B cell (primary cell): ENCODE measurements at regions of chr14 and their contacts with region 1.

Region 1: GRCh38 chr14:66359500-66359899 is 126.7 kb upstream of the CCDC196 start:
- DNase-seq: peak; percentile 68
- ATAC-seq: peak; percentile 36
- H3K4me3 ChIP-seq: no peak overlapping the region
- H3K4me3 Mint-ChIP-seq: no peak overlapping the region
- H3K27ac ChIP-seq: no peak overlapping the region
- H3K27ac Mint-ChIP-seq: no peak overlapping the region
- H3K4me1 ChIP-seq: no peaks in the 10 kb centered on the region
- H3K4me1 Mint-ChIP-seq: no peaks in the 10 kb centered on the region
- H3K27me3 ChIP-seq: peaks cover 0 to 5% (median 3%) of the 10 kb centered on the region in 4 experiments
- H3K27me3 Mint-ChIP-seq: peaks cover 11% of the 10 kb centered on the region
- CTCF ChIP-seq: peak; percentile 79

Region 2: DNA sequence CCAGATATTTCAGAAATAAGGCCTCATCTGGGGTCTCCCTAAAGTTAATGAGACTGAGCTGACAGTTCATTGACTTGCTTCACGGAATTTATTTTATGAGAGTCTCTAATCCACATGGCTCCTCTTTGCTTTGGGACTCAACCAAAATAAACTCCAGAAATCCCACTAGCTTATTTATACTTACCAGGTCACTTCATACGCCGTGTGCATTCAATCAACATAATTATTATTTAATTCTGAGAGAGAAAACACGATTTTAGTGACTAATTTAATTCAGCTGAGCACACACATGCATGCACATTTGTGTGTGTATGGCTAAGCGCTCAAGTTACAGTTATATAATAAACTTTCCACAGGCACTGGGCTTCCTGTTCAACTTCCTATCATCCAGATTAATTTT is 206.8 kb before region 1 on chr14:
- CTCF ChIA-PET with region 1: no interaction called
- POLR2A ChIA-PET with region 1: no interaction called
- intact Hi-C with region 1: no loop called
- DNase-seq: no peak
- ATAC-seq: no peak
- H3K4me3 ChIP-seq: no peak overlapping the region
- H3K4me3 Mint-ChIP-seq: no peak overlapping the region
- H3K27ac ChIP-seq: no peak overlapping the region
- H3K27ac Mint-ChIP-seq: no peak overlapping the region
- H3K4me1 ChIP-seq: no peaks in the 10 kb centered on the region
- H3K4me1 Mint-ChIP-seq: no peaks in the 10 kb centered on the region
- H3K27me3 ChIP-seq: no peaks in the 10 kb centered on the region
- H3K27me3 Mint-ChIP-seq: no peaks in the 10 kb centered on the region
- CTCF ChIP-seq: no peak

Region 3: DNA sequence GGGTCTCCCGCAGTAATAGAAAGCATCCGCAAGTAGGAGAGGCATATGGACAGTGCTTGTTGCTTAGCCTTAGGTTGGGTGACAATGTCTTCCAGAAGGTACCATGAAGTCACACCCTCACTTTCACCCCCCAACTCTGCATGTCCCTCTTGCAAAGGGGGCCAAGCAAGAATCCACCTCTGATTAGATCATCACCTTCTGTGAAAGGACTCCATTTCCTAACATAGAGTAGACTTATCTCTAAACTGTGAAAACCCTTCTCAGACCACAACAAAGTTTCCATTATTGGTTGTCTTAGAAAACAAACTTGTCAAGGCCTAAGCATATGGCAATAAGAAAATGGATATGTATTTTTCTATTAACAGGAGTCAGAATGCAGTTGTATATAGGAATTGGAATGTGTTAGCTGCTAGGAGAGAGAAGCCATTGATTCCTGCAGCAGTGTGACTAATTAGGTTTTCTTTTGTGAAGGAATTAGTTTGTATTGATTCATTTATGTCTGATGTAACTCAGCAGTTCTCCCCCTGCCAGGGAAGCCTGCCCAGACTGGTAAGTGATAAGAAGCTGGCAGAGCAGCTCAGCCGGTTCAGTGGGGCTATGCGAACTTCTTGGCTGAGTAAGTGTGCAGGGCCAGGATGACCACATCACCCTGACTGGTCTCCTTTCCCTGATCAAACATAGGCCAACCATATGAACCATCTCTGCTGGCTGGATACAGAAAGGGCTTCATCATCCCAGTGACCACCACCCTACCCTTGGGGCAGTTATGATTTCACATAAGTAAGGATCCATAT is 19.4 kb after region 1 on chr14:
- CTCF ChIA-PET with region 1: interaction called, 13 read pairs
- POLR2A ChIA-PET with region 1: no interaction called
- intact Hi-C with region 1: no loop called
- DNase-seq: no peak
- ATAC-seq: no peak
- H3K4me3 ChIP-seq: no peak overlapping the region
- H3K4me3 Mint-ChIP-seq: no peak overlapping the region
- H3K27ac ChIP-seq: no peak overlapping the region
- H3K27ac Mint-ChIP-seq: no peak overlapping the region
- H3K4me1 ChIP-seq: no peaks in the 10 kb centered on the region
- H3K4me1 Mint-ChIP-seq: no peaks in the 10 kb centered on the region
- H3K27me3 ChIP-seq: no peaks in the 10 kb centered on the region
- H3K27me3 Mint-ChIP-seq: no peaks in the 10 kb centered on the region
- CTCF ChIP-seq: no peak

Region 4: DNA sequence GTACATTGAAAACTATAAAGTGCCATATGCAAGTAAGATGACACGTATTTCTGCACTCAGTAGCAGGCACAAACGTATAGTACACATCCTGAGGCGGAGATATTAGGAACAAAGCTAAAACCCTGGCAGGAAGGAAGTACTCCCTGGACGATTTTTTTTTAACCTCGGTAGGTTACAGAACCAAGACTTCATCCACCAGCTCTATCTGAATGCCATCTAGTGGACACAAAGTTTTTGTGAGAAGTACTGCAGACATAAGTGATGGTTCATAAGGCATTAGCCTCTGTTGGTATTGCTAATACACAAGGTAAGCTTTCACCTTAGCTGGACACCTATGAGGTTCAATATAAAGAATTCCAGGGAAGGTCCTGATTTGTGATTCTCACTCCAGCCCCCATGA is 43.7 kb after region 1 on chr14:
- CTCF ChIA-PET with region 1: interaction called, 11 read pairs
- POLR2A ChIA-PET with region 1: no interaction called
- intact Hi-C with region 1: no loop called
- DNase-seq: peak; percentile 8
- ATAC-seq: no peak
- H3K4me3 ChIP-seq: no peak overlapping the region
- H3K4me3 Mint-ChIP-seq: no peak overlapping the region
- H3K27ac ChIP-seq: no peak overlapping the region
- H3K27ac Mint-ChIP-seq: no peak overlapping the region
- H3K4me1 ChIP-seq: no peaks in the 10 kb centered on the region
- H3K4me1 Mint-ChIP-seq: peaks cover 4% of the 10 kb centered on the region
- H3K27me3 ChIP-seq: no peaks in the 10 kb centered on the region
- H3K27me3 Mint-ChIP-seq: no peaks in the 10 kb centered on the region
- CTCF ChIP-seq: no peak

Region 5: GRCh38 chr14:67111022-67111421 is 751.5 kb after region 1 on chr14:
- CTCF ChIA-PET with region 1: interaction called, 22 read pairs
- POLR2A ChIA-PET with region 1: no interaction called
- intact Hi-C with region 1: no loop called
- DNase-seq: no peak
- ATAC-seq: no peak
- H3K4me3 ChIP-seq: no peak overlapping the region
- H3K4me3 Mint-ChIP-seq: no peak overlapping the region
- H3K27ac ChIP-seq: no peak overlapping the region
- H3K27ac Mint-ChIP-seq: no peak overlapping the region
- H3K4me1 ChIP-seq: no peaks in the 10 kb centered on the region
- H3K4me1 Mint-ChIP-seq: no peaks in the 10 kb centered on the region
- H3K27me3 ChIP-seq: no peaks in the 10 kb centered on the region
- H3K27me3 Mint-ChIP-seq: no peaks in the 10 kb centered on the region
- CTCF ChIP-seq: no peak

Region 6: DNA sequence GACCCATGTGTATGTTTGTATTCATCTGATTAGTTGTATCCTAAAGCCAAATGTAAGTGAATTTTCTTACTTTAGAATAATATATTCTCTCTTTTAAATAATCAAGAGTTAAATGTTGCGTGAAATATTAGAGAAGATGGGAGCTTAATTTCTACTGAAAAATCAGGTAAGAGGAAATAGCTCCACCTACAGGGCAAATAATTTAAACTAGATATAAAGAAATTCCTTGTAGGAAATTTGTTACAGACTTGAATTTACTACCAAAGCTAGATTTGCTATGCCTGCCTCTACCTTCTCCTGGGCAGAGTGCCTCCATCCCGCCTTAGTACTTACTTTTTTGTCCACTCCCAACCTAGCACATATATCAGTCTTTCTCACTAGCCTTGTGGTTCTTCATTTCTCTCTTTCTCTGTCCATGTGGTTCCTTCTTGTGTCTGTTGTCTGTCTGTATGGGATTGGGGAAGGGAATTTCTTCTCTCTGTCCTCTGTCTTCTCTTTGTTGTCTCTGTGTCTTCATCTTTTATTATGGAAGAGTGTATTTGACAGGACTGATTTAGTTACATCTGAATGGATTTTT is 926.5 kb after region 1 on chr14:
- CTCF ChIA-PET with region 1: interaction called, 31 read pairs
- POLR2A ChIA-PET with region 1: no interaction called
- intact Hi-C with region 1: no loop called
- DNase-seq: peak; percentile 56
- ATAC-seq: no peak
- H3K4me3 ChIP-seq: no peak overlapping the region
- H3K4me3 Mint-ChIP-seq: no peak overlapping the region
- H3K27ac ChIP-seq: no peak overlapping the region
- H3K27ac Mint-ChIP-seq: no peak overlapping the region
- H3K4me1 ChIP-seq: no peaks in the 10 kb centered on the region
- H3K4me1 Mint-ChIP-seq: no peaks in the 10 kb centered on the region
- H3K27me3 ChIP-seq: no peaks in the 10 kb centered on the region
- H3K27me3 Mint-ChIP-seq: no peaks in the 10 kb centered on the region
- CTCF ChIP-seq: peak; percentile 85